ENCODE measurements at regions of chr1 and their contacts with region 1.

Region 1: GRCh38 chr1:156383023-156383422 is 14.0 kb downstream of the RHBG start:
- DNase-seq: peak; percentile 70
- ATAC-seq: peak; percentile 87
- H3K4me3 ChIP-seq: no peak overlapping the region
- H3K4me3 Mint-ChIP-seq: no peak overlapping the region
- H3K27ac ChIP-seq: no peak overlapping the region
- H3K27ac Mint-ChIP-seq: no peak overlapping the region
- H3K4me1 ChIP-seq: peaks cover 0 to 11% of the 10 kb centered on the region in 2 donors
- H3K4me1 Mint-ChIP-seq: peaks cover 4% of the 10 kb centered on the region
- H3K27me3 ChIP-seq: peaks cover 0 to 22% (median 9%) of the 10 kb centered on the region in 4 experiments
- H3K27me3 Mint-ChIP-seq: peaks cover 14% of the 10 kb centered on the region
- CTCF ChIP-seq: peak; percentile 78

Region 2: GRCh38 chr1:156371553-156372264 is 11.3 kb before region 1 on chr1:
- CTCF ChIA-PET with region 1: interaction called, 18 read pairs
- POLR2A ChIA-PET with region 1: no interaction called
- intact Hi-C with region 1: no loop called
- DNase-seq: no peak
- ATAC-seq: no peak
- H3K4me3 ChIP-seq: no peak overlapping the region
- H3K4me3 Mint-ChIP-seq: no peak overlapping the region
- H3K27ac ChIP-seq: no peak overlapping the region
- H3K27ac Mint-ChIP-seq: no peak overlapping the region
- H3K4me1 ChIP-seq: peaks cover 9 to 10% of the 10 kb centered on the region in 2 donors
- H3K4me1 Mint-ChIP-seq: peaks cover 4% of the 10 kb centered on the region
- H3K27me3 ChIP-seq: peaks cover 0 to 42% (median 15%) of the 10 kb centered on the region in 4 experiments
- H3K27me3 Mint-ChIP-seq: peaks cover 50% of the 10 kb centered on the region
- CTCF ChIP-seq: no peak

Region 3: DNA sequence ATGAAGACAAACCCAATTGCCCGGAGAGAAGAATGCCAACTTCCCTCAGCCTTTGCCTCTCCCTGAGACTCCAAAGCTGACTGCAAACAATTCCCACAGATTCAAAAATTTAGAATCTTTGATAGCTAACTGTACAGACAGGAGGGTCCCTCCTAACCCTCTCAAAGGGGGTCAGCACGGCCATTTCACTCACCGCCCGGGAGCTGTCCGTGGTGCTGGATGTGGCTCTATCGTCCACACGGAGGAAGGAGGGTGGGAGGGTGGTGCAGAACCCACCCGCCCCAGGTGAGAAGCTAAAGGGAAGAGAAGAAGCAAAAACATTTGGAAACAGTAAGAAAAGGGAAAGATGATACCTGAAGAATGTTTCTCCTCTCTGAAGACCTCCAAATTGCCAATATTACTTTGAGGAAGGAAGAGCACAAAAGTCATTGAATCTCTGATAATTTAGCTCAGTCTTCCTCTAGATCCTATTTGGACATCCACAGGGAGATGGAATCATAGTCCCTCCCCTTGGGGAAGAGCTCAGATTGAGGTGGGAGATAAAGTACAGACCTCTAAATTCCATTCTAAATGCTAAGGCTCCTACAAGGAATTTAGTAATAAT is 31.5 kb after region 1 on chr1:
- CTCF ChIA-PET with region 1: interaction called, 15 read pairs
- POLR2A ChIA-PET with region 1: interaction called, 4 read pairs
- intact Hi-C with region 1: no loop called
- DNase-seq: peak; percentile 28
- ATAC-seq: no peak
- H3K4me3 ChIP-seq: no peak overlapping the region
- H3K4me3 Mint-ChIP-seq: no peak overlapping the region
- H3K27ac ChIP-seq: no peak overlapping the region
- H3K27ac Mint-ChIP-seq: no peak overlapping the region
- H3K4me1 ChIP-seq: peaks cover under 1 to 1% of the 10 kb centered on the region in 2 donors
- H3K4me1 Mint-ChIP-seq: peaks cover 5% of the 10 kb centered on the region
- H3K27me3 ChIP-seq: peaks cover 0 to 55% (median 24%) of the 10 kb centered on the region in 4 experiments
- H3K27me3 Mint-ChIP-seq: peaks cover 63% of the 10 kb centered on the region
- CTCF ChIP-seq: no peak

Region 4: DNA sequence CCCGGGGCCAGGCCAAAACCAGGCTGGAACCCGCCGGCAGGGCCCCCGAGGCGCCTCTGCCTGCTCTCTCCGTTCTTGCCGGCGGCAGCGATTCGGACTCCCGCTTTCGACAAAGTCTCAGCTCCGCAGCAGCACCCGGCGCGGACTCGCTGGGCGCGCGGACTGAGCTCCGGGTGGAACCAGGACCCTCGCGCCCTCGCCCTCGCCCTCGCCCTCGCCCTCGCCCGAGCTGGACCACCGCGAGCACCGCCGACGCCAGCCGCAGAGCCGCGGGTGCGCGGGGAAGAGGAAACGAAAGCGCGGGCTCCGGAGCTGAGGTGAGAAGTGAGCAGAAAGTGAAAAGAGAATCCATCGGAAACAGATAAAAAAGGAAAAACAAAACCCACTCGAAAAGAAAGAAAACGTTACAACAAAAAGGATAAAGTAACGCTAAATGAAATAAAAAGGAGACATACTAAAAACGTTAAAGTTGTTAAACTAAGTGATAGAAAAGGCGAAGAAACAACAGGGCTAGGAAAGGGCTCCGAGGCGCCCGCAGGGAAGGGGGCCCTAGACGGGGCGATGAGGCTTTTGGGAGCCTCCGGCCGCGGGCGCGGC is 52.6 kb after region 1 on chr1:
- CTCF ChIA-PET with region 1: interaction called, 445 read pairs
- POLR2A ChIA-PET with region 1: no interaction called
- intact Hi-C with region 1: no loop called
- DNase-seq: peak; percentile 81
- ATAC-seq: peak; percentile 58
- H3K4me3 ChIP-seq: peak overlapping the region; percentile 16 to 69 (median 41)
- H3K4me3 Mint-ChIP-seq: peak overlapping the region; percentile 87
- H3K27ac ChIP-seq: no peak overlapping the region
- H3K27ac Mint-ChIP-seq: no peak overlapping the region
- H3K4me1 ChIP-seq: peaks cover 32 to 41% of the 10 kb centered on the region in 2 donors
- H3K4me1 Mint-ChIP-seq: peaks cover 20% of the 10 kb centered on the region
- H3K27me3 ChIP-seq: peaks cover 0 to 93% (median 82%) of the 10 kb centered on the region in 4 experiments
- H3K27me3 Mint-ChIP-seq: peaks cover 82% of the 10 kb centered on the region
- CTCF ChIP-seq: no peak

Region 5: GRCh38 chr1:156480411-156481192 is 97.6 kb after region 1 on chr1:
- CTCF ChIA-PET with region 1: interaction called, 24 read pairs
- POLR2A ChIA-PET with region 1: no interaction called
- intact Hi-C with region 1: no loop called
- DNase-seq: peak; percentile 85
- ATAC-seq: peak; percentile 84
- H3K4me3 ChIP-seq: no peak overlapping the region
- H3K4me3 Mint-ChIP-seq: peak overlapping the region; percentile 70
- H3K27ac ChIP-seq: peak overlapping the region; percentile 60 to 72
- H3K27ac Mint-ChIP-seq: peak overlapping the region; percentile 93
- H3K4me1 ChIP-seq: peaks cover 16 to 41% of the 10 kb centered on the region in 2 donors
- H3K4me1 Mint-ChIP-seq: peaks cover 54% of the 10 kb centered on the region
- H3K27me3 ChIP-seq: no peaks in the 10 kb centered on the region
- H3K27me3 Mint-ChIP-seq: no peaks in the 10 kb centered on the region
- CTCF ChIP-seq: peak; percentile 81

Region 6: DNA sequence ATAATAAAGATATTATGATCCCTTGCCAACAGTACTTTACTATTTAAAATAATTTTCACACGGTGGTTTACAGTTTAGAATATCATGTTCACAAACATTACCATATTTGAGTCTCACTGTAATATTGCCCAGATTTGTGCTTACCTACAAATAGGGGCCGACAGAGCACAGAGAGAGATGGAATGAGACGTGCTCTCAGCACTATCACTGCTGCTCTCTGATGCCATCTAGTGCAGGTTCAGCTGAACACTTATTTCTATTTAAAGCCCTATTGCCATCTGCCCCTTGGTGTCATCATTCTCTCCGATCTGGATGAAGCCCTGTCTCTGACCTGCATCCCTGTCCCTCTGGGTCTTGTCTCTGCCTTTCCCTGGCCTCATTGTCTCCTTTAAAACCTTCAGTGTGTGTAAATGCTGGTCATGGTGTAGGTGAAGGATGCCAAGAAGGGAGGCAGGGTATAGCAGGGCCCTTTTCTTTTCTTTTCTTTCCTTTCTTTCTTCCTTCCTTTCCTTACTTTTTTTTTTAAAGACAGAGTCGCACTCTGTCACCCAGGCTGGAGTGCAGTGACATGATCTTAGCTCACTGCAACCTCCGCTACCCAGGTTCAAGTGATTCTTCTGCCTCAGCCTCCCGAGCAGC is 225.1 kb after region 1 on chr1:
- CTCF ChIA-PET with region 1: interaction called, 126 read pairs
- POLR2A ChIA-PET with region 1: no interaction called
- intact Hi-C with region 1: no loop called
- DNase-seq: peak; percentile 86
- ATAC-seq: peak; percentile 81
- H3K4me3 ChIP-seq: no peak overlapping the region
- H3K4me3 Mint-ChIP-seq: peak overlapping the region; percentile 71
- H3K27ac ChIP-seq: no peak overlapping the region
- H3K27ac Mint-ChIP-seq: peak overlapping the region; percentile 81
- H3K4me1 ChIP-seq: peaks cover 22 to 28% of the 10 kb centered on the region in 2 donors
- H3K4me1 Mint-ChIP-seq: peaks cover 26% of the 10 kb centered on the region
- H3K27me3 ChIP-seq: peaks cover 0 to 10% (median 3%) of the 10 kb centered on the region in 4 experiments
- H3K27me3 Mint-ChIP-seq: peaks cover 10% of the 10 kb centered on the region
- CTCF ChIP-seq: peak; percentile 80

Measured in B cell (primary cell).